HepG2 (cell line): ENCODE measurements at regions of chr3 and their contacts with region 1.

Region 1: GRCh38 chr3:128607710-128608048 is 42.9 kb downstream of the RPN1 start:
- DNase-seq: no peak
- ATAC-seq: no peak
- H3K4me3 ChIP-seq: no peak overlapping the region
- H3K27ac ChIP-seq: no peak overlapping the region
- H3K4me1 ChIP-seq: peaks cover 37% of the 10 kb centered on the region
- H3K27me3 ChIP-seq: no peaks in the 10 kb centered on the region
- CTCF ChIP-seq: no peak
- EP300 ChIP-seq: no peak
- POLR2A ChIP-seq: no peak
- RAD21 ChIP-seq: no peak

Region 2: DNA sequence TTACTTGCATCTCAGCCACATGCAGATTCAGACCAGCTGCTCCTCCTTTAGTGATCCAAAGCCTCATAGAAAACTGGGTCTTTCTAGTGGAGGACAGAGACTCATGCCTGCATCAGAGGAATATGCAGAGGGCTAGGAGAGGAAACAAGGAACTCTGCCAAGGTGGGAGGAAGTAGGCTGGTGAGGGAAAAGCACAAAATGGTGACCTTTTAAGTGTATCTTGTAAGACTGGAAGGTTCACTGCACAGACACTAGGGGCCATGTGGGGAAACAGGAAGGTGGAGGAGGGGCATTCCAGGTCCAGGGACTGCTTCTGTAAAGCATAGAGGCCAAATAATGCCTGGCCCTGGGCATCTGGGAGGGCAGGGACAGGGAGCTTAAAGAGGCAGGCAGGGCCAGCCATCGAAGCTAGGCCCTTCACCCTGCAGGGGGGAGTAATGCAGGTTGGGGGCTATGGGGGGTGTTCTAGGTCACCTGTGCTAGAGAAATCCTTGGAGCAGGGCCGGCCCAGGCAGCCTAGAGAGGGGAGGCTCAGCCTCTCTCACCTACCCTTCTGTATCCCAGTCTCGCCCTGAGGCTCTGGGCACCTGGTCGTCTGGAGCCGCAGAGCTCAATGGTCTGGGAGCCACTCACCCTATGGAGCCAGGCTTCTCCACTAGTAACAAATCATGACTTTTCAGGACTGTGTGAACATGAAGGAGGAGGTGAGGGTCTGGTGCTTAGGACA is 258.7 kb before region 1 on chr3:
- CTCF ChIA-PET with region 1: no interaction called
- POLR2A ChIA-PET with region 1: no interaction called
- in situ Hi-C with region 1: no loop called
- intact Hi-C with region 1: no loop called
- DNase-seq: no peak
- ATAC-seq: no peak
- H3K4me3 ChIP-seq: no peak overlapping the region
- H3K27ac ChIP-seq: no peak overlapping the region
- H3K4me1 ChIP-seq: peaks cover 53% of the 10 kb centered on the region
- H3K27me3 ChIP-seq: no peaks in the 10 kb centered on the region
- CTCF ChIP-seq: peak; percentile 4; the same call in 1 of the 2 replicates
- EP300 ChIP-seq: no peak
- POLR2A ChIP-seq: no peak
- RAD21 ChIP-seq: no peak

Region 3: DNA sequence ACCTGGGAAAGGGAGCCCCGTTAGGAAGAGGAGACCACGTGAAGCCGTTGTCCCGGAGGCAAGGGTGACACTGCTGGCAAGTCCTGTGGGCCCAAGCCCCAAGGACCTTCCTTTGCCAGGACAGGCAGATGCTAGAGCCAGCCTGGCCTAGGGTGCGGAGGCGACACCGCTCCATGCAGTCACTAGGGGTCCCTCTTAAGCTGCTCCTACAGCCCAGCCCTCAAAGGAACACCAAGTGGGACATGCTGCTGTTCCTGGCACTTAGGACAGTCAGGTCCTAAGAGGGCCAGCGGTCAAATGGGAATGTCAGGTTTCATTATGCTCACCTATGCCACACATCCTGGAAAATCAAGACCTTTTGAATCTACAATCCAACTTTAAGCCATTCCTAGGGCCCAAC is 16.7 kb before region 1 on chr3:
- CTCF ChIA-PET with region 1: interaction called, 12 read pairs
- POLR2A ChIA-PET with region 1: interaction called, 8 read pairs
- in situ Hi-C with region 1: no loop called
- intact Hi-C with region 1: loop called (anchors 1 kb)
- DNase-seq: peak; percentile 58
- ATAC-seq: peak; percentile 98
- H3K4me3 ChIP-seq: no peak overlapping the region
- H3K27ac ChIP-seq: no peak overlapping the region
- H3K4me1 ChIP-seq: peaks cover 19% of the 10 kb centered on the region
- H3K27me3 ChIP-seq: peaks cover 0 to 2% of the 10 kb centered on the region in 2 experiments; a peak in 2 of 5 replicates
- CTCF ChIP-seq: peak; percentile 97
- EP300 ChIP-seq: no peak
- POLR2A ChIP-seq: no peak
- RAD21 ChIP-seq: peak; percentile 91